Activated CD4-positive, alpha-beta T cell treated with anti-CD3 and anti-CD28 coated beads, Interleukin-2, amount 10 ng/mL, durations not matched to agents 24 days and 14 days (primary cell): ENCODE measurements at regions of chr10 and their contacts with region 1.

Region 1: DNA sequence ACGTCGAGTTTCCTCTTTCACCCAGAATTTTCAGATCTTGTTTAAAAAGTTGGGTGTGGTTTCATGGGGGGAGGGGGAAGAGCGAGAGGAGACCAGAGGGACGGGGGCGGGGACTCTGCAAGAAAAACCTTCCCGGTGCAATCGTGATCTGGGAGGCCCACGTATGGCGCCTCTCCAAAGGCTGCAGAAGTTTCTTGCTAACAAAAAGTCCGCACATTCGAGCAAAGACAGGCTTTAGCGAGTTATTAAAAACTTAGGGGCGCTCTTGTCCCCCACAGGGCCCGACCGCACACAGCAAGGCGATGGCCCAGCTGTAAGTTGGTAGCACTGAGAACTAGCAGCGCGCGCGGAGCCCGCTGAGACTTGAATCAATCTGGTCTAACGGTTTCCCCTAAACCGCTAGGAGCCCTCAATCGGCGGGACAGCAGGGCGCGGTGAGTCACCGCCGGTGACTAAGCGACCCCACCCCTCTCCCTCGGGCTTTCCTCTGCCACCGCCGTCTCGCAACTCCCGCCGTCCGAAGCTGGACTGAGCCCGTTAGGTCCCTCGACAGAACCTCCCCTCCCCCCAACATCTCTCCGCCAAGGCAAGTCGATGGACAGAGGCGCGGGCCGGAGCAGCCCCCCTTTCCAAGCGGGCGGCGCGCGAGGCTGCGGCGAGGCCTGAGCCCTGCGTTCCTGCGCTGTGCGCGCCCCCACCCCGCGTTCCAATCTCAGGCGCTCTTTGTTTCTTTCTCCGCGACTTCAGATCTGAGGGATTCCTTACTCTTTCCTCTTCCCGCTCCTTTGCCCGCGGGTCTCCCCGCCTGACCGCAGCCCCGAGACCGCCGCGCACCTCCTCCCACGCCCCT is at the start of gene VIM:
- DNase-seq: peak; percentile 94
- H3K4me3 Mint-ChIP-seq: peak within 1 kb of the TSS; percentile 96
- H3K27ac Mint-ChIP-seq: peak within 1 kb of the TSS; percentile 95
- H3K4me1 Mint-ChIP-seq: peaks cover 44% of the 10 kb centered on the region
- H3K27me3 Mint-ChIP-seq: peaks cover 2% of the 10 kb centered on the region
- total RNA-seq, gene VIM: 178 and 182 TPM in 2 replicates

Region 2: GRCh38 chr10:16509996-16510395 is 718.3 kb before region 1 on chr10:
- intact Hi-C with region 1: no loop called
- DNase-seq: no peak
- H3K4me3 Mint-ChIP-seq: no peak overlapping the region
- H3K27ac Mint-ChIP-seq: no peak overlapping the region
- H3K4me1 Mint-ChIP-seq: peaks cover 3% of the 10 kb centered on the region
- H3K27me3 Mint-ChIP-seq: no peaks in the 10 kb centered on the region

Region 3: GRCh38 chr10:16817125-16818019 is 410.9 kb before region 1 on chr10 and contains the start of gene RSU1:
- intact Hi-C with region 1: loop called (anchors 2 kb)
- DNase-seq: peak; percentile 100
- H3K4me3 Mint-ChIP-seq: peak within 1 kb of the TSS; percentile 98
- H3K27ac Mint-ChIP-seq: peak within 1 kb of the TSS; percentile 97
- H3K4me1 Mint-ChIP-seq: peaks cover 31% of the 10 kb centered on the region
- H3K27me3 Mint-ChIP-seq: peaks cover 10% of the 10 kb centered on the region
- total RNA-seq, gene RSU1: 44.5 and 47.4 TPM in 2 replicates

Region 4: GRCh38 chr10:17001961-17002749 is 226.2 kb before region 1 on chr10:
- intact Hi-C with region 1: loop called (anchors 1 kb)
- DNase-seq: peak; percentile 89
- H3K4me3 Mint-ChIP-seq: peak overlapping the region; percentile 71
- H3K27ac Mint-ChIP-seq: peak overlapping the region; percentile 95
- H3K4me1 Mint-ChIP-seq: peaks cover 33% of the 10 kb centered on the region
- H3K27me3 Mint-ChIP-seq: peaks cover 57% of the 10 kb centered on the region

Region 5: DNA sequence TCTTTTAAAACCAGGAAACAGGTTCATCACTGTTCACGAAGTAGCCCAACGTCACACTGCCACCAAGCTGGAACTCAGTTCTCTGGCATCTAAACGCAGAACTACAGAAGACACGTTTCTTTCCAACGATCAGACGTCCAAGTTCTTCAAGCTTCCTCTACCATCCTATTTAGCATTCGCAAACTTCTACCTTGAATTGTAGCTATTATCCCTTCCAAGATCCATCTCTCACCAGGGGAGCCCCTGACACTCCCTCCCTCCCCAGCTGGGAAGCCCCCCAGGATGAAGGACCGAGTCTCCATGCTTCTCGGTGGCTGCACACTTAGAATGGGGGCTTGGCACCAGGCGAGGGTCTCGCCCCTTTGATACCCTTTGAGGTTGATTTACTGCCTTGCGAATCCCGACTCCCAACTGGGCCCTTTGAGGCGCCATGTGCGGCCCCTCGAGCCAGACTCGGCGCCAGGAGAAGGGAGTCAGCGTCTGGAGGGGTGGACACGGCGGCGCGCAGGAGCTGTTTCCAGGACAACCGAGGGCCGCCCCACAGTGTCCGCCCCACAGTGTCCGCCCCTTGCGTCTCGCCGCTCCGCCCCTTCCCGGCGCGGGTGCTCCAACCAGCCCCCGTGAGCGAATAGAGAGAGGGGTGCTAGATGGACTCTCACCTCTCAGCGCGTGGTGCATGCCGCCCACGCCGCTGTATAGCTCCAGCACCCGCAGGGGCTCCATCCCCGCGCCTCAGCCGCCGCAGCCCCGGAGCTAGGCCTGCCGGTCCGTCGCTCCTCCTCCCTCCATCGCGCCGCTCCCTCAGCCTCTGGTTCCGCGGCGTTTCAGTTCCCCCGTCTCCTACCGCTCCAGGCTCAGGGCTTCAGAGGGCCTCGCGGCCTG is 27.2 kb before region 1 on chr10 and contains the start of gene TRDMT1:
- intact Hi-C with region 1: loop called (anchors 1 kb)
- DNase-seq: peak; percentile 96
- H3K4me3 Mint-ChIP-seq: peak within 1 kb of the TSS; percentile 95
- H3K27ac Mint-ChIP-seq: peak within 1 kb of the TSS; percentile 92
- H3K4me1 Mint-ChIP-seq: peaks cover 33% of the 10 kb centered on the region
- H3K27me3 Mint-ChIP-seq: no peaks in the 10 kb centered on the region
- total RNA-seq, gene TRDMT1: 3.9 and 5.6 TPM in 2 replicates

Region 6: GRCh38 chr10:17216217-17216900 is 12.0 kb before region 1 on chr10:
- intact Hi-C with region 1: loop called (anchors 1 kb)
- DNase-seq: peak; percentile 86
- H3K4me3 Mint-ChIP-seq: peak overlapping the region; percentile 8
- H3K27ac Mint-ChIP-seq: peak overlapping the region; percentile 88
- H3K4me1 Mint-ChIP-seq: peaks cover 32% of the 10 kb centered on the region
- H3K27me3 Mint-ChIP-seq: no peaks in the 10 kb centered on the region